ENCODE measurements at regions of chr2 and their contacts with region 1.

Region 1: DNA sequence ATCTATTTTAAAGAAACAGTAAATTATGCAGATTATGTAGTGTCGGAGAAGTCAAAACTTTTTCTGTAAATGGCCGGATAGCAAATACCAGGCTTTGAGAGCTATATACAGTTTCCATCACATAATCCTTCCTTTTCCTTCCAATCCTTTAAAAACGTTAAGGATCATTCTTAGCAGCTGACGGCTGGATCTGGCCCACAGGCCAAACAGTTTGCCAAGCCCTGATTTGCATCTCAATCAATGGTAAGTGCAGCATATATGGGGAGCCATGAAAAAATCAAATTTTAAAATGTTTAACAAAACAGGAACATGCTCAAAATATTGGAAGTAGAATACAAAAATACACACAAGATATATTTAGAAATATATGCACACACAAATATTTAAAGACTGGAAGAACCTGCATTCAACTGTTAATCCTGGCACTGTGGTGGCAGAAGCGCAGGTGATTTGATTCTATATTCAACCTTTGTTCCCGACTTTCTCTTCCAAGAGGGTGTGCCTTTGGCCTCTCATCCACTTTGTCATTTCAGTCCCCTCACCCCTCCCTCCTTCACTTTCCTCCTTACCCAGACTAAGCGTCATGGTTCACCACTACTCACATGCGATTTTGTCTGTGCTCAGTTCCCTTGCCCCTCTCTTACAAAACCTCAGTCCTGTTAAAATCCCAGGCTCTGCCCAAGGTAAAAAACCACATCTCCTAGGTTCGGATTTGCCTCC is 27.3 kb downstream of the NDUFA10 start:
- DNase-seq: no peak
- H3K4me3 ChIP-seq: no peak overlapping the region
- H3K27ac ChIP-seq: no peak overlapping the region
- H3K4me1 ChIP-seq: no peaks in the 10 kb centered on the region
- H3K27me3 ChIP-seq: no peaks in the 10 kb centered on the region
- CTCF ChIP-seq: no peak
- POLR2A ChIP-seq: no peak

Region 2: DNA sequence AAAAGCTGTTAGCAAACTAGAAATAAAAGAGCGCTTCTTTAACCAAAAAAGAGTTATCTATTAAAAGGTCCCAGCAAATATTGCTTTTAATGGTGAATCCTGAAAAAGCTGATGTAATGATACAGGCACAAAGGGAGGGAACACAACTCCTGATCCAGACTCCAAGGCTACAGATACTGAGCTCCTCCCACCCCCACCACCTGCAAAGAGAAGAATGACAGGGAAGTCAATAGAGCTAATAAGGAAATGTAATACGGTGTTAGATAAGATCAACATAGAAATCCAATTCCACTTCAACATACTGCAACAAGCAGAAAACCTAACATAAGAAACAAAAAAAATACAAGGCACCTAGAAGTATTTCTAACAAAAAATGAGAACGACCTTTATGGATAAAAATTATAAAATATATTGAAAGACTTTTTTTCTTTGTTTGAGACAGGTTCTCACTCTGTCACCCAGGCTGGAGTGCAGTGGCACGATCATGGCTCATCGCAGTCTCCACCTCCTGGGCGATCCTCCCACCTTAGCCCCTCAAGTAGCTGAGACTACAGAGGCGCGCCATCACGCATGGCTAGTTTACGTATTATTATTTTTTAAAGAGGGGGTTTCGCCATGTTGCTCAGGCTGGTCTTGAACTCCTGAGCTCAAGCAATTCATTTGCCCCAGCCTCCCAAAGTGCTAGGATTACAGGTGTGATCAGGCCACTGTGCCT is 789.2 kb before region 1 on chr2:
- CTCF ChIA-PET with region 1: no interaction called
- POLR2A ChIA-PET with region 1: no interaction called
- dilution Hi-C with region 1: no loop called
- intact Hi-C with region 1: loop called (anchors 5 kb)
- DNase-seq: no peak
- H3K4me3 ChIP-seq: no peak overlapping the region
- H3K27ac ChIP-seq: no peak overlapping the region
- H3K4me1 ChIP-seq: no peaks in the 10 kb centered on the region
- H3K27me3 ChIP-seq: no peaks in the 10 kb centered on the region
- CTCF ChIP-seq: no peak
- POLR2A ChIP-seq: no peak

Region 3: DNA sequence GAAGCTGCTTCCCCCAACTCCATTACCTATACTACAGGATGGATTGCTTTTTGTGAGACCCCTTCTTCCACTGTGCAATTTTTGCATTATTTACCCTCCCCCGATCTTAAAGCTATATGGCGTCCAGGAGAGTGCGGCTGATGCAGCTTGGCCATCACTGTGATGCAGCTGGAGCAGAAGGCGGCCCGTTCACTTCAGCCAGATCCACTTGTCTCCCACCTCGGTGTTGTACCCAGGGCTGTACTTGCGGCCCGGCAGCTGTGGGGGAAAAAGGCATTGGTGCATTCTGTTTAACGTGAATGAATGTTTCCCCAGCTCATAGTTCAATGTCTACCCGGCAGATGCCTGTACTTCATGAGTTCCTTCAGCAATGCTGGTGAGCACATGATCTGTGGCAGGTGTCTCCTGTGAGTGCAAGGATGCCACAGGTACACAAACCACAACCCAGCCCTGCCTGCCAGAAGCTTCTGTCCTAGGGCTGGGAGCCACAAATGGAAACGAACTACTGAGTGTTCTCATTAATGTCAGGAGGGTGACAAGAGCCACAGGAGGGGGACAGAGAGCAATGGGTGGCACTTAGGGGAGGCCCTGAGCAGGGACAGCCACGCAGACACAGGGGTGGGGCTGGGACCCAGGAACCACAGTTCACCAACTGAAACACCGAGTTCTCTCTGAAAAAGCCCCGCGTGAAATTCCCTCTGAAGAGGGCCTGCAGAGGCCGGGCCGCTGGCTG is 36.8 kb before region 1 on chr2:
- CTCF ChIA-PET with region 1: no interaction called
- POLR2A ChIA-PET with region 1: no interaction called
- dilution Hi-C with region 1: no loop called
- intact Hi-C with region 1: no loop called
- DNase-seq: no peak
- H3K4me3 ChIP-seq: no peak overlapping the region
- H3K27ac ChIP-seq: no peak overlapping the region
- H3K4me1 ChIP-seq: no peaks in the 10 kb centered on the region
- H3K27me3 ChIP-seq: no peaks in the 10 kb centered on the region
- CTCF ChIP-seq: no peak
- POLR2A ChIP-seq: no peak